Activated T-helper 2 cell treated with anti-CD3 and anti-CD28 coated beads, Interferon-gamma antibody, Interleukin-2, Interleukin-4, amounts not matched to agents 10 μg/mL and 5 μg/mL and 100 μg/mL, durations not matched to agents 14 hours and 24 hours and 36 hours (primary cell): ENCODE measurements at regions of chr3 and their contacts with region 1.

Region 1: DNA sequence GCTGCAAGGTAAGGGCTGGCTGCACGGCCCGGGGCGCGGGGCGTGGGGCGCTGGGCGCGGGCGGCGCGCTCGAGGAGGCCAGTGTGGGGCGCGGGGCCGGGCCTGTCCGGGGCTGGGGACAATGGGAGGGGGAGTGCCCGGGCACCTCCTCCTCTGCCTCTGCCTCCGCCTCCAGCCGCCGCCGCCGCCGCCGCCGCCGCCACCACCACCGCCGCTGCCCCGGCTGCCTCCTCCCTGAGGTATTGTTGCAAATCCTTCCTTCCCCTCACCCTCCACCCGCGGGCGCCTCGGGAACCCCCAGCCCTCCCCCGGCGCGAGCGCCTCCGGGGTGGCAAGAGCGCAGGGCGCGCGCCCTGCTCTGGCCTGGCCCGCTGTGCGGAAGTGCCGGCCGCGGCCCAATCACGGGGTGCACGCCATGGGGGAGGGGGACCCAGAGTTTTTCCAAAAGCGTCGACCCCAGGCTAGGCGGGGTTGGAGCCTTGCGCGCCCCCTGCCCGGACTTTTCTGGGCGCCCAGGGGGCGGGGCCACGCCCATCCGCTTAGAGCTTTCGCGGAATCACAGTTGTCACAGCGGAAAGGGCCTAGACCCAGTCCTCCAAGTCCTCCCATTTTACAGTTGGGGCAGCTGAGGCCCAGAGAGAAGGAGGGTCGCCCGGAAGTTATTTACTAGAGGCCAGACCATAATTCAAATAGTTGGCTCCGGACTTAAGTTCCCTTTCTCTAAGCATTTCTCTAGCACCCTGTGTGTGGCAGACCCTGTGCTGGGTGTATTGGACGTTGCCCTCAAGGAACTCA is at the start of gene LPP:
- DNase-seq: peak; percentile 87
- H3K4me3 Mint-ChIP-seq: peak within 1 kb of the TSS; percentile 91
- H3K27ac Mint-ChIP-seq: peak within 1 kb of the TSS; percentile 93
- H3K4me1 Mint-ChIP-seq: peaks cover 63% of the 10 kb centered on the region
- H3K27me3 Mint-ChIP-seq: no peaks in the 10 kb centered on the region
- total RNA-seq, gene LPP: 54.5 and 59.0 TPM in 2 replicates

Region 2: GRCh38 chr3:187994221-187995042 is 159.8 kb before region 1 on chr3:
- intact Hi-C with region 1: loop called (anchors 2 kb)
- DNase-seq: no peak
- H3K4me3 Mint-ChIP-seq: peak overlapping the region; percentile 35
- H3K27ac Mint-ChIP-seq: peak overlapping the region; percentile 77
- H3K4me1 Mint-ChIP-seq: peaks cover 70% of the 10 kb centered on the region
- H3K27me3 Mint-ChIP-seq: no peaks in the 10 kb centered on the region

Region 3: GRCh38 chr3:188111002-188111584 is 43.1 kb before region 1 on chr3:
- intact Hi-C with region 1: no loop called
- DNase-seq: no peak
- H3K4me3 Mint-ChIP-seq: no peak overlapping the region
- H3K27ac Mint-ChIP-seq: no peak overlapping the region
- H3K4me1 Mint-ChIP-seq: peaks cover 7% of the 10 kb centered on the region
- H3K27me3 Mint-ChIP-seq: peaks cover 8% of the 10 kb centered on the region

Region 4: DNA sequence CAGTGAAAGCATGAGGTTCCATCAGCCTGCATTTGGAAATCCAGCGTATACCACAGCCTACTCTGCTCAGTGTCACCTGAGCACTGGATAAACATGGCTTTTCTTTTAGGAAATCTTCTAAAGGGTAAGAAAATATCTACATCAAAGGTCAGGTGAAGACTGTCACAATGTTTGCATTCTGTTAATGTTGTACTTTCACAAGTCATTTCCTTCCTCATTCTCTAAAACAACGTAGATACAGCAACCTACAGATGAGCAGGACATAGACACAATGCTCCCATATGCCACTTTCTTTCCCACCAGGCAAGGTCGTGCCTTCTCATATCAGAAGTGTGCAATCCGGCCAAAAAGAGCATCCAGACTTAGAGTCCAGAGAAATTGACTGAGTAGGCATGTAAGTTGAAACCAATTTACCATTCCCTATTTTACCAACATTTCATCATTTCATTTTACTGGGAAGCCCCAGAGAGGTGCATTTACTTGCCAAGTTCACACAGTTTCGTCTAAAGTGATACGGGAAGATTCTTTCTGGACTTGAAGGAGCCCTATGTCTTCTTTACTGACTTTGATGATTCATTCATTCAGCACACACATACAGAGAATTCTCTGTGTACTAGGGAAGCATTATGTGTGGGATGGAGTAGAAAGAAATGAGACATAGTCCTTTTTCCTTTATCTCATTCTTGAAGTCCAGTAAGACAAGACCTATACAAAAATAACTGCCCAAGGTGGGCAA is 30.9 kb before region 1 on chr3:
- intact Hi-C with region 1: loop called (anchors 5 kb)
- DNase-seq: no peak
- H3K4me3 Mint-ChIP-seq: no peak overlapping the region
- H3K27ac Mint-ChIP-seq: peak overlapping the region; percentile 48
- H3K4me1 Mint-ChIP-seq: peaks cover 19% of the 10 kb centered on the region
- H3K27me3 Mint-ChIP-seq: peaks cover 10% of the 10 kb centered on the region

Region 5: DNA sequence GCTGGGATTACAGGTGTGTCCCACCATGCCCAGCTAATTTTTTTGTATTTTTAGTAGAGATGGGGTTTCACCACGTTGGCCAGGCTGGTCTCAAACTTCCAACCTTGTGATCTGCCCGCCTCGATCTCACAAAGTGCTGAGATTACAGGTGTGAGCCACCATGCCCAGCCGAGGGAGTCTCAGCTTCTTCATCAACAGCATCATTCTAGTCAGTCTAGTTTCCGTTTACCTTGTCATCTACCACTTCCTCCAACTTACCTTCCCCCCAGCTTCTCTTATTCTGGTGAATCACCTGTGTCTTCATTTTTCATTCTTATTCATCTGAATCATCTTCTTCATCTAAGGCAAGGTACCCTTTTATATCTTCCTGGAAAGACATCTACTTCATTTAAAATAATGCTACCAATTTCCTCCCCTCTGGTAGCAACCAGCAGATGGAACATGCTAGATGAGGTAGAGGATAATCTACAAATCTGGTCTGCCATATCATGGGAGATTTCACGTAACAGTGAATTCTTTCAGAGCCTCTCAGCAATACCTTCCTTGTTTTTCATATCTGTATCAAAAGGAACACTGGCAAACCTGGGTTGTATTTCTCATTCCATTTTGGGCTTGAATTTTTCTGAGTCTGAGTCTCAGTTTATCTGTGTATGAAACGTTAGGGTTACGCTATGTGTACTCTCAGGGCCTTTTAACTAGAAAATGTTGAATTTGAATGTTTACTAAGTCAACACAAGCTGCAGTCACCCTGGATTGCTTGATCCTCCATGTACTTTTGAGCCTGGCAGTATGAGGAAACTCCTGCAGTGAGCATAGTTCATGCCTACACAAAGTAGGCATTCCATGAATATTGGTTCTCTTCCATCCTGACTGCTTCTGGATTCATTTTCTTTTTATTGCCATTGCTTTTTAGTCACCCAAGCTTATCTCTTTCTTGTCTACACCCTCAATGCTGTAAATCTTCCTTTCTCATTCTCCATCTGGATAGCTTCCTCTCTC is 16.5 kb after region 1 on chr3:
- intact Hi-C with region 1: loop called (anchors 1 kb)
- DNase-seq: no peak
- H3K4me3 Mint-ChIP-seq: no peak overlapping the region
- H3K27ac Mint-ChIP-seq: peak overlapping the region; percentile 56
- H3K4me1 Mint-ChIP-seq: peaks cover 38% of the 10 kb centered on the region
- H3K27me3 Mint-ChIP-seq: no peaks in the 10 kb centered on the region

Region 6: GRCh38 chr3:188389711-188390342 is 235.6 kb after region 1 on chr3:
- intact Hi-C with region 1: loop called (anchors 10 kb)
- DNase-seq: peak; percentile 30
- H3K4me3 Mint-ChIP-seq: no peak overlapping the region
- H3K27ac Mint-ChIP-seq: peak overlapping the region; percentile 75
- H3K4me1 Mint-ChIP-seq: peaks cover 33% of the 10 kb centered on the region
- H3K27me3 Mint-ChIP-seq: no peaks in the 10 kb centered on the region